ENCODE measurements at regions of chr1 and their contacts with region 1.

Region 1: DNA sequence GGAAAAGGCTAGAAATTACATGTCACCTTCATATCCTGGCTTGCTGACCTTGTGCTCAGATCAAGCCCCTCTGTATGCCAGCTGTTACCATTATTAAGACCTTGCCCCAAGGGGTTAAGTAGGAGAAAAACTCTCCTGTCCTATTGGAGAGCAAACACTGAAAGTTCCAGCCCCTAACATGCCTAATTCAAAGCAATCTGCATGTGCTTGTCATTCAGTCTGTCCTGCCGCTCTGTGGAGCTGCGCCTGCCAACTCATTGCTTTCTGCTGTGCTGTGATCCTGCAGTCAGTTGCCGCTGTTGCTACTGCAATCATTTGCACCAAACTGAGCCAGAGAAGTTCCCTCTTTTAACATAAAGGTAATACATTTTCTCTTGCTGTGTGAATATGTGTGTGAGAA is 113.4 kb downstream of the DISP1 start:
- DNase-seq: peak; percentile 61
- ATAC-seq: peak; percentile 93 to 97

Region 2: GRCh38 chr1:222892137-222892769 is 36.0 kb before region 1 on chr1:
- intact Hi-C with region 1: loop called in 1 of 2 experiments (anchors 5 kb)
- DNase-seq: no peak
- ATAC-seq: peak in 1 of 2 donors; percentile 44

Region 3: GRCh38 chr1:222974496-222974895 is 46.3 kb after region 1 on chr1:
- intact Hi-C with region 1: loop called in 1 of 2 experiments (anchors 10 kb)
- DNase-seq: no peak
- ATAC-seq: peak in 1 of 2 donors; percentile 22

Region 4: GRCh38 chr1:223074445-223075300 is 146.5 kb after region 1 on chr1:
- intact Hi-C with region 1: loop called in 1 of 2 experiments (anchors 5 kb)
- DNase-seq: no peak
- ATAC-seq: peak; percentile 45 to 73

Region 5: DNA sequence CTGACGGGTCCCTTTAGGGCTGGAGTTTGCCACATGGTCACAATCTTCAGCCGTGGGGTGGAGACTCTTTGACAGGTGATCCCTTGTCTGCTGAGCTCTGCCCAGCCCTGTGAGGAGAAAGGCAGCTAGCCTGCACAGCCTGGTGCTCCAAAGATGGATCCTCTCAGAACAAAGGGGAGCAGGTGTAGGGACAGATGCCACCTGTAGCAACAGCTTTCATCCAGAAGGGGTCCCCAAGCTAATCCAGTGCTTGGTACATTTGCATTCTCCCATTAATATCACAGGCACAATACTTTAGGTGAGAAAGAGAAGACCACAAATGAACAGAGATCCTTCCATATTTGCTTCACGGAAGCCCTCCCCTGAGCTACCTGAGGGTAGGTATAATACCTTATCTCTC is 558.2 kb after region 1 on chr1:
- intact Hi-C with region 1: no loop called
- DNase-seq: no peak
- ATAC-seq: no peak